ENCODE measurements at regions of chr18 and their contacts with region 1.

Region 1: GRCh38 chr18:3411854-3412268 is 38.1 kb upstream of the TGIF1 start:
- DNase-seq: peak in 7 of 9 experiments; percentile 4 to 57 (median 27)
- ATAC-seq: no peak
- H3K4me3 ChIP-seq: no peak overlapping the region
- H3K4me3 Mint-ChIP-seq: peak overlapping the region; percentile 61
- H3K27ac ChIP-seq: no peak overlapping the region
- H3K27ac Mint-ChIP-seq: no peak overlapping the region
- H3K4me1 ChIP-seq: peaks cover 6% of the 10 kb centered on the region
- H3K4me1 Mint-ChIP-seq: peaks cover 6% of the 10 kb centered on the region
- H3K27me3 ChIP-seq: no peaks in the 10 kb centered on the region
- H3K27me3 Mint-ChIP-seq: no peaks in the 10 kb centered on the region
- CTCF ChIP-seq: no peak

Region 2: DNA sequence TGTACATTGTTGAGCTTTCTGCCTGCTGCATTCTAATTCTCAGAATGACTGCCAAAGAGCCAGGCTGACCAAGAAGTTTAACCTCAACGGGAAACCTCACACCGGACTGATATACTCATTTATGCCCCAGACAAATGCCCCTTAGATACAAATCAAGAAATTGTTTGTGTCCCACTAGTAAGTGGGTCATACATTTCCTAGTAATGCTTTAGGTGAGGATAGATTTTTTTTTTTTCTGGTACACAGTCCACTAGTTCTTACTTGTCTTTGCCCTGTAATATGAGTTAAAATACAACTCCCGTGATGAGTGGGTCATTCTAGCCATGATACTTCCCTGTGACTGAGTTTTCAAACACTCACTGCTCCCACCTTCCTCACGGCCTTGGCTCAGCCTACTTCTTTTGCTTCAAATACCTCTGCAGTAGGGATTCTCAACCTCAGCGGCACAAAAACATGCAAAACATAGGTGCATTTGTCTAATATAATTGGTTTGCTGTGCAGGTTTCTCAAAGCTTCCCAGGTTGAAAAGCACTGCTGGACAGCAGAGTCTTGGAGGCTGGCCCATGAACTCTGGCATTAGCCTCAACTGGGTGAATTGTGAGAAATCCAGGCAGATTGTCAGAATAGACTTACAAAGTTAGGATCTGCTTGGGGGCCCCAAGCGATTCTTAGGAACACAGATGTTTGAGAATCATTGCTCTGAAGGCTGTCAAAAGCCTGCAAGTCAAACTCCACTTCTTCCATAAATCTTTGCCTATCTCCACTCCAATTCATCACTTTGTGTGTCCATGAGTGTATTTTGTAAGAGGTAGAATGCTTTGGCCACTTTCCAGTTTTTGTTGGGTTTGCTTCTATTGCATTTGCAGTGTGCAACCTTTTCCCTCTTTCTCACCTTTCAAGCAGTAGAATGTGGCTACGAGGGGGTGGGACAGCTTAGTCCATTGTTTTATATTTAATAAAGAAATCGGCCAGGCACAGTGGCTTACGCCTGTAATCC is 73.6 kb after region 1 on chr18:
- CTCF ChIA-PET with region 1: no interaction called
- POLR2A ChIA-PET with region 1: no interaction called
- intact Hi-C with region 1: loop called in 1 of 2 experiments (anchors 2 kb)
- DNase-seq: no peak
- ATAC-seq: no peak
- H3K4me3 ChIP-seq: no peak overlapping the region
- H3K4me3 Mint-ChIP-seq: no peak overlapping the region
- H3K27ac ChIP-seq: no peak overlapping the region
- H3K27ac Mint-ChIP-seq: no peak overlapping the region
- H3K4me1 ChIP-seq: no peaks in the 10 kb centered on the region
- H3K4me1 Mint-ChIP-seq: no peaks in the 10 kb centered on the region
- H3K27me3 ChIP-seq: no peaks in the 10 kb centered on the region
- H3K27me3 Mint-ChIP-seq: no peaks in the 10 kb centered on the region
- CTCF ChIP-seq: no peak

Measured in CD8-positive, alpha-beta T cell (primary cell).